GM10248 (cell line): ENCODE measurements at regions of chr10 and their contacts with region 1.

Region 1: DNA sequence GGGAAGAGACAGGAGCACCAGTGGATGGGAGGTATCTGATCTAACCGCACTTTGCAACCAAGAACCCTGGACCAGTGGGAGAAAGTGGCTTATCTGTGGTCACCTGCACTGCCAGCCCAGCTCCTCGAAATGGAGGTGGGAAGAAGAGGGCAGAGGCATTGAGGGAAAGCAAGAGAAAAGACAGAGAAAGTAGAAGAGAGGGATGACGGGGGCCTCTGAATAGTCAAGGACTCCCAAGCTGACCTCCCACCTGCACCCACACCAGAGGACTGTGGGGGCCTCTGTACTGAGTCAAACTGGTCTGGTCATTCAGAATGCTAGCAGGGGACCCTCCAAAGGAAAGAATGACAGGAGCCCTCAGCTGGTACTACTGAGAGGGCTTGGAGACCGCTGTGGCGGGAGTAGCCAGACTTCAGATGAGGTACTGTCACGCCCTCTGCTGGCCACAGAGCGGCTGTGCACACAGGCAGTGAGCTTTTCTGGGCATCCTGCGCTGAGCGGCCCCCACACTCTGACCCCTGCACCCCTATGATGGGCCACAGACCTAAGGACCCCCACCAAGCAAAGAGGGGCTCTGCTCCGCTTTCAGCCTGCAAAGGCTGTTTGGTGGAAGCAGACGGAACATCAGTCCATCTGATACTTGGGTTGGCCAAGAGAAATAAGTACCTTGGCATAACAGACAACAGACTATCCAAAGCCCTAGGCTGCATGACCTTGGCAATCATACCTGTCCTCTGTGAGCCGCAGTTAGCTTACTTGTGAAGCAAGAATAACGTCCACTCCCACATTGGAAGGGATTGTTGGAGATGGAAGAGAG is 112.9 kb downstream of the COL13A1 start:
- DNase-seq: peak; percentile 79
- CTCF ChIP-seq: peak; percentile 94

Region 2: GRCh38 chr10:69515699-69516259 is 398.8 kb before region 1 on chr10:
- CTCF ChIA-PET with region 1: interaction called, 16 read pairs
- POLR2A ChIA-PET with region 1: no interaction called
- DNase-seq: peak; percentile 86
- CTCF ChIP-seq: peak; percentile 91

Region 3: DNA sequence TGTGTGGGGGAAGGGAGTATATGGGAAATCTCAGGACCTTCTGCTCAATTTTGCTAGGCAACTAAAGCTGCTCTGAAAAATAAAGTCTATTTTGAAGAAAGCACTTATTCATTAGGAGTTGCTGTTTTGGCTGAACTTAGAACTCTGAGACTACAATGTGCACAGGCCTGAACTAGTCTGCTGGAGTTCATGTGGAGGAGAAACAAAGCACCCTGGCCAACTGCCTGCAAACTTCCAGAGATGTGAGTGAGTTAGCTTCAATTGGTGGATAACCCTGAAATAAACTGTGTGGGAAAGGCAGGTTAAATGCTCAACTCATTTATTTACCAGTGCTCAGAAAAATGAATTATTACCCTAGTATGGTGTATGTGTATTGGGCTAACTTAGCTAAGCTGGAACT is 301.8 kb before region 1 on chr10:
- CTCF ChIA-PET with region 1: no interaction called
- POLR2A ChIA-PET with region 1: no interaction called
- DNase-seq: no peak
- CTCF ChIP-seq: no peak

Region 4: DNA sequence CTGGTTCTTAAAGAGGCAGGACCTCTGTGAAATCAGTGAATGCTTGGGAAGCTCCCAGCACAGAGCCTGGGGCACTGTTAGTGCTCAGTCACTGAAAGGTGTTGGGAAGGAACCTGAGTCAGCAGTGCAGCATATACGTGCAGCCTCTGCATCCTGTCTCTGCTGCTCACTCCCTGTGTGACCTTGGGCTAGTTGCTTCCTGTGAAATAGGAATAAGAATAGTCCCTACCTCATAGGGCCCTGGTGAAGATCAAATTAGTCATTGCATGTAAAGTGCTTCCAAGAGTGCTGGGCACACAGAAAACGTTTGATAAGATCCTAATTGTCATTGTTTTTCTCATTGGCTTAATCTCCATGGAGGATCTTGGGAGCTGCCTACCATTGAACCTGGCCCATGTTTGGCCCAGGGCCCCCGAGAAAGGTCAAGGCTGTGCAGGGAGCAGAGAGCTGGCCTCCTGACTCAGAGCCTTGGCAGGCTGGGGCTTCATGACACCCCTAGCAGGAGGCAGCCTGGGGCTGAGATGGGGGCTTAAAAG is 186.2 kb before region 1 on chr10:
- CTCF ChIA-PET with region 1: no interaction called
- POLR2A ChIA-PET with region 1: no interaction called
- DNase-seq: no peak
- CTCF ChIP-seq: no peak

Region 5: GRCh38 chr10:69742928-69743602 is 171.5 kb before region 1 on chr10:
- CTCF ChIA-PET with region 1: interaction called, 11 read pairs
- POLR2A ChIA-PET with region 1: no interaction called
- DNase-seq: no peak
- CTCF ChIP-seq: no peak

Region 6: DNA sequence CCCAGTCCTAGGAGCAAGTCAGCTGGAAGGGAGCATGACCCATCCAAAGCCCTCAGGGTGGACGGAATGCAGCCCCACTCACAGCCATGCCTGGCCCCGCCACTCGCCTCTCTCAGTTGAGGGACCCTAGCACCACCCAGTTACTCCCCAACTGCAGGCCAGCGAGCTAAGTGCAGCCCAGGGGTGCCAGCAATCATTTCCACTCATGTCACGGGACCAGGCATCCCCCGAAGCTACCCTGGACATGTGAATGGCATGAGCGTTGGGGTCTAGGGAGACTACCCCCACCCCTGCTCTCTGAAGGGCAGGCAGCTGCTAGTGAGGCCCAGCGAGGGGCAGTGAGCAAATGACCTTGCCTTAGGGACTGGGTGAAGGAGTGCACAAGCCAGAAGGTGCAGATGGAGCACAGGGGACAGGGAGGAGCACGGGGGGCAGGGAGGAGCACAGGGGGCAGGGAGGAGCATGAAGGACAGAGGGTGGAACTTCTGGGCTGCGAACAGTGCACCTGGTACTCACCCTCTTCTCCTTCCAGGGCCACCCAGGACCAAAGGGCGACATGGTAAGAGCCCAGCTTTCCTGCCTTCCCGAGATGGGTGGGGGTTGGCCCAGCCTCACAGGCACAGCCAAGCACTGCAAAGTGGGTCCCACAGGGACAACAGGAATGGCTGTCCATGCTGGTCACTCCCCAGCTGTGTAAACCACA is 25.6 kb before region 1 on chr10:
- CTCF ChIA-PET with region 1: interaction called, 16 read pairs
- POLR2A ChIA-PET with region 1: no interaction called
- DNase-seq: no peak
- CTCF ChIP-seq: no peak

Region 7: DNA sequence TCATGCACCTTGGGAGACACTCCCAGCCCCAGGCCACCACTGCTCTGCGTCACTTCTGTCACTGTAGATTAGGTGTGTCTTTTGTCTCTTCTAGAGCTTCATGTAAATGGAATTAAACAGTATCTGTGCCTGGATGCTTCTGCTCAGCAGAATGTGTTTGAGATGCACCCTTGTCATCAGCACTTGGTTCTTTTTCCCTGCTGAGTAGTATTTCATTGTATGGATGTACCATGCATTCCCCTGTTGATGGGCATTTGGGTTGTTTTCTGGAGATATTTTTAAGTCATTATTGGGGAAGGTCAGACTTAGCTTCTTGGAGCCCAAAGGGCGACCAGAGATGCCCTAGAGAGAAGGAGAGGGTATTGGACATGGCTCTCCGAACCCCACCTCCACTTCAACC is 13.7 kb after region 1 on chr10:
- CTCF ChIA-PET with region 1: interaction called, 29 read pairs
- POLR2A ChIA-PET with region 1: no interaction called
- DNase-seq: no peak
- CTCF ChIP-seq: no peak

Region 8: GRCh38 chr10:69957886-69958555 is 43.4 kb after region 1 on chr10:
- CTCF ChIA-PET with region 1: interaction called, 14 read pairs
- POLR2A ChIA-PET with region 1: no interaction called
- DNase-seq: peak; percentile 76
- CTCF ChIP-seq: peak; percentile 89